Activated CD4-positive, alpha-beta T cell treated with anti-CD3 and anti-CD28 coated beads, Interleukin-2, amount 10 ng/mL, durations not matched to agents 24 days and 14 days (primary cell): ENCODE measurements at regions of chr5 and their contacts with region 1.

Region 1: GRCh38 chr5:131382407-131383395 is 118.8 kb downstream of the CDC42SE2 start:
- DNase-seq: peak; percentile 89
- H3K4me3 Mint-ChIP-seq: peak overlapping the region; percentile 77
- H3K27ac Mint-ChIP-seq: peak overlapping the region; percentile 91
- H3K4me1 Mint-ChIP-seq: peaks cover 71% of the 10 kb centered on the region
- H3K27me3 Mint-ChIP-seq: no peaks in the 10 kb centered on the region

Region 2: GRCh38 chr5:131170540-131171275 is 212.0 kb before region 1 on chr5 and contains the start of gene LYRM7:
- intact Hi-C with region 1: loop called (anchors 1 kb)
- DNase-seq: peak; percentile 99
- H3K4me3 Mint-ChIP-seq: peak within 1 kb of the TSS; percentile 100
- H3K27ac Mint-ChIP-seq: peak within 1 kb of the TSS; percentile 97
- H3K4me1 Mint-ChIP-seq: peaks cover 45% of the 10 kb centered on the region
- H3K27me3 Mint-ChIP-seq: no peaks in the 10 kb centered on the region
- total RNA-seq, gene LYRM7: 17.9 and 18.1 TPM in 2 replicates

Region 3: GRCh38 chr5:131242728-131243255 is 139.9 kb before region 1 on chr5:
- intact Hi-C with region 1: no loop called
- DNase-seq: no peak
- H3K4me3 Mint-ChIP-seq: no peak overlapping the region
- H3K27ac Mint-ChIP-seq: no peak overlapping the region
- H3K4me1 Mint-ChIP-seq: peaks cover 7% of the 10 kb centered on the region
- H3K27me3 Mint-ChIP-seq: no peaks in the 10 kb centered on the region

Region 4: DNA sequence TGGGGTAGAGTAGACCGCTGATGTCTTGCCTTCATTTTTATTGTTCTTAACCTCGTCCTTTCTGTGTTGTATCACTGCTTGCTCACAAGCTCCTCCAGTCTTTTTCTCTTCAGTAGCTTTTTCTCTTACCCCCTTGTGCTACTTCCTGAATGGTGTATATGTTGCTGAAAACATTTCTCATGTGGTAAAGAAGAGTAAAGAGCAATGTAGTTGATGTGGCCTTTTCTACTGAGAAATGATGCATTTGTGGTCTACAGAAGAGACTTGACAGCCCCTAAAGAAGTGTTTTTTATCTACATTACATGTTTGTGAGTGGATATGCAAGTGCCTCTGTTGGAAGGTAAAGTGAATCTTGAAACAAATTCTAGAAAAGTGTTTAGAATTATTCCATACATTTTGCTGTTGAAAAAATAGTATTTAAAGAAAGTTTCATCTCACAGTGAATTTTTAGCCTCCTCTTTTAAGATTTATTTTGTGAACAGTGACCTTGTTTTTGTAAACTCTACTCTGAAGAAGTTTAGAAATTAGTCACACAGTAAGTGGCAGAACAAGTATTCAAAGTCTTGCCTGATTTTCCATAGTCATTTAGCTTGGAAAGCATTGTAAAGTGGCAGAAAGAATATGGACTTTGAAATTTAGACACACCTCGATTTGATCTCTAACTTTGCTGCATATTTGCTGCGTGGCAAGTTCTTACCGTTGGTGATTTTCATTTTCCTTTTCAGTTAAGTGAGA is 101.4 kb before region 1 on chr5:
- intact Hi-C with region 1: loop called (anchors 1 kb)
- DNase-seq: peak; percentile 85
- H3K4me3 Mint-ChIP-seq: peak overlapping the region; percentile 87
- H3K27ac Mint-ChIP-seq: peak overlapping the region; percentile 91
- H3K4me1 Mint-ChIP-seq: peaks cover 71% of the 10 kb centered on the region
- H3K27me3 Mint-ChIP-seq: no peaks in the 10 kb centered on the region

Region 5: DNA sequence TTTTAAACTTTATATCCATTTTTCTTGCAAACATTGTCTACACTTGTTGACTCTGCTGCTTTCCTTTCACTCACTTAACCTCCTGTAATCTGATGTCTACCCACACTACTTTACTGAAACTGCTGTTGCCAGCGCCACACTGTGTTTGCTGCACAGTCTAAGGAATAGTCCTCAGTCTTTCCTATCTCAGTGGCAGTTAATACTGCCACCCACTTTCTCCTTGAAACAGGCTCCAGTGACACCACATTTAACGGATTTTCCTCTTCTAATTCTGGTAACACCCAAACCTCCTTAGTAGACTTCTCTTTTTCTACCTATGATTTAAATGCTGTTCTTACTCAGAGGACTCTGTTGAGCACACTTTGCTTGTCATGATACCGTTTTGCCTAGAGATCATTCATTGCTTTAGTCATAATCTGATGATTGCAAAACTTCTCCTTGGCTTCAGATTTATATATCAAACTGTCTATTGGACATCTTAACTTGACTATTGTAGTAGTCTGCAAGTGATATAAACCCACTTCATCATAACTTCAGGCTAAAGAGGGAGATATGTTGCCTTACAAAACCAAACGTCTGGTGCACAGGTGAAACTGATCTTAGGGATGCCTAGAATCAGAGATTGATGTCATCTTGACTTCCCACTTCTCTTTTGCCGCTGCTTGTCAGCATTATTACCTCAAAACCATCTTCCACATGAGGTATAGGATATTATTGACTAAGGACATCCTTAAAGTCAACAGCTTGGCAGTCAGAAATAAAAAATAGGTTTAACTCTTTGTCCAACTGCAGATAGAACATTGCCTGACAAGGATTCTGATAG is 24.8 kb before region 1 on chr5:
- intact Hi-C with region 1: loop called (anchors 1 kb)
- DNase-seq: peak; percentile 80
- H3K4me3 Mint-ChIP-seq: peak overlapping the region; percentile 49
- H3K27ac Mint-ChIP-seq: peak overlapping the region; percentile 81
- H3K4me1 Mint-ChIP-seq: peaks cover 45% of the 10 kb centered on the region
- H3K27me3 Mint-ChIP-seq: no peaks in the 10 kb centered on the region

Region 6: GRCh38 chr5:131417240-131417869 is 34.7 kb after region 1 on chr5:
- intact Hi-C with region 1: loop called (anchors 1 kb)
- DNase-seq: peak; percentile 93
- H3K4me3 Mint-ChIP-seq: peak overlapping the region; percentile 46
- H3K27ac Mint-ChIP-seq: peak overlapping the region; percentile 39
- H3K4me1 Mint-ChIP-seq: peaks cover 40% of the 10 kb centered on the region
- H3K27me3 Mint-ChIP-seq: no peaks in the 10 kb centered on the region

Region 7: GRCh38 chr5:131952301-131952857 is 569.7 kb after region 1 on chr5:
- intact Hi-C with region 1: no loop called
- DNase-seq: no peak
- H3K4me3 Mint-ChIP-seq: no peak overlapping the region
- H3K27ac Mint-ChIP-seq: no peak overlapping the region
- H3K4me1 Mint-ChIP-seq: no peaks in the 10 kb centered on the region
- H3K27me3 Mint-ChIP-seq: peaks cover 13% of the 10 kb centered on the region